OCI-LY7 (cell line): ENCODE measurements at regions of chr5 and their contacts with region 1.

Region 1: GRCh38 chr5:54243473-54244080 is 66.8 kb downstream of the ARL15 start:
- DNase-seq: peak; percentile 46
- H3K4me3 ChIP-seq: no peak overlapping the region
- H3K27ac ChIP-seq: no peak overlapping the region
- H3K4me1 ChIP-seq: no peaks in the 10 kb centered on the region
- CTCF ChIP-seq: peak; percentile 92

Region 2: DNA sequence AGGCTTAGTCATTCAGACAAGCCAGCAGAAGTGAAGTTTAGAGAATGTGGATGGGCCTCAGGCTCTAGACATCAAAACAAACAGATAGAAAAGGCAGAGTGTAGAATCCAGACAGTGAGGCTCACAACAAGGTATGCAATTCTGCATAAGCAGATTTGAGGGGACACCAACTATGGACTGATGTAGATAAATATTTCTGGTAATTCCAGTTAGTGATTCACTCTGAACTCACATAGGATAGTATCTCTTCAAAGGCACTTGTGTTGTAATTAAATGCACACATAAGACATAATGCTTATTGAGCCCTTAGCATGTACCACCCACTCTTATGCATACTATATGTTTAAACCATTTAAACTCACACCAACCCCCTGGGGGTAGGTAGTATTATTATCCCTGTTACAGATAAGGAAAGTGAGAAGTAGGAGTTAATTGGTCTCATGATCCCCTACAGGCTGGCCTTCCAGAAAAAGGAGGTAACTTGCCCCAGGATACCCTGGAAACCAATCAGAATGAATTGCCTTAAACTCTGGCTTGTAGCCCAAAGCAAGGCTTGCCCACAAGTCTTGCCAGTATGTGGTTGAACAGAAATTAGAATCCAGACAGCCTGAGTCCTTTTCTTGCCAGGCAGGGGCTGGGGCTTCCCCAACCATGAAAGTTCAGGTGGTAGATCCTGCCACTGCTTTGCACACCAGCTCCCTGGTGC is 172.5 kb after region 1 on chr5:
- CTCF ChIA-PET with region 1: interaction called, 7 read pairs
- POLR2A ChIA-PET with region 1: no interaction called
- intact Hi-C with region 1: loop called (anchors 1 kb)
- DNase-seq: no peak
- H3K4me3 ChIP-seq: no peak overlapping the region
- H3K27ac ChIP-seq: no peak overlapping the region
- H3K4me1 ChIP-seq: no peaks in the 10 kb centered on the region
- CTCF ChIP-seq: no peak

Region 3: GRCh38 chr5:54492178-54492577 is 248.6 kb after region 1 on chr5:
- CTCF ChIA-PET with region 1: interaction called, 3 read pairs
- POLR2A ChIA-PET with region 1: interaction called, 3 read pairs
- intact Hi-C with region 1: loop called (anchors 2 kb)
- DNase-seq: no peak
- H3K4me3 ChIP-seq: no peak overlapping the region
- H3K27ac ChIP-seq: no peak overlapping the region
- H3K4me1 ChIP-seq: no peaks in the 10 kb centered on the region
- CTCF ChIP-seq: no peak

Region 4: GRCh38 chr5:54867310-54867944 is 623.9 kb after region 1 on chr5:
- CTCF ChIA-PET with region 1: no interaction called
- POLR2A ChIA-PET with region 1: no interaction called
- intact Hi-C with region 1: loop called (anchors 5 kb)
- DNase-seq: peak; percentile 69
- H3K4me3 ChIP-seq: no peak overlapping the region
- H3K27ac ChIP-seq: no peak overlapping the region
- H3K4me1 ChIP-seq: no peaks in the 10 kb centered on the region
- CTCF ChIP-seq: peak; percentile 89